OCI-LY7 (cell line): ENCODE measurements at regions of chr3 and their contacts with region 1.

Region 1: DNA sequence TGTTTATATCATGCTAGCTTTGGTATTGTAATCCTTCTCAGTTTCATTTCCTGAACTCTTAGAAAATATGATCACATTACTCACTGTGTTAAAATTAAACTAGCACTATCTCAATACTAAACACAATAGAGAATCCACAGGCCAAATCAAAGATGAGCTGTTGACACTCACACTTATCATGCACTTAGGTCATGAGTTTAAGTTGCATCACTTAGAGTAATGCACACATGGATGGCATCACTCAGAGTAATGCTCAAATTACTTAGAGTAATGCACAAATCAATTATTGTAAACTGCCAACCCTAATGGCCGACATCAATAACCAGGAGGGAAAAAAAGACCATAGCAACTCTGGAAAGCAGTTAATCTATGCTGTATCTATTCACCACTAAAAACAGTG is 40.0 kb upstream of the MCF2L2 start:
- DNase-seq: no peak
- H3K4me3 ChIP-seq: no peak overlapping the region
- H3K27ac ChIP-seq: no peak overlapping the region
- H3K4me1 ChIP-seq: peaks cover 28% of the 10 kb centered on the region
- CTCF ChIP-seq: no peak

Region 2: DNA sequence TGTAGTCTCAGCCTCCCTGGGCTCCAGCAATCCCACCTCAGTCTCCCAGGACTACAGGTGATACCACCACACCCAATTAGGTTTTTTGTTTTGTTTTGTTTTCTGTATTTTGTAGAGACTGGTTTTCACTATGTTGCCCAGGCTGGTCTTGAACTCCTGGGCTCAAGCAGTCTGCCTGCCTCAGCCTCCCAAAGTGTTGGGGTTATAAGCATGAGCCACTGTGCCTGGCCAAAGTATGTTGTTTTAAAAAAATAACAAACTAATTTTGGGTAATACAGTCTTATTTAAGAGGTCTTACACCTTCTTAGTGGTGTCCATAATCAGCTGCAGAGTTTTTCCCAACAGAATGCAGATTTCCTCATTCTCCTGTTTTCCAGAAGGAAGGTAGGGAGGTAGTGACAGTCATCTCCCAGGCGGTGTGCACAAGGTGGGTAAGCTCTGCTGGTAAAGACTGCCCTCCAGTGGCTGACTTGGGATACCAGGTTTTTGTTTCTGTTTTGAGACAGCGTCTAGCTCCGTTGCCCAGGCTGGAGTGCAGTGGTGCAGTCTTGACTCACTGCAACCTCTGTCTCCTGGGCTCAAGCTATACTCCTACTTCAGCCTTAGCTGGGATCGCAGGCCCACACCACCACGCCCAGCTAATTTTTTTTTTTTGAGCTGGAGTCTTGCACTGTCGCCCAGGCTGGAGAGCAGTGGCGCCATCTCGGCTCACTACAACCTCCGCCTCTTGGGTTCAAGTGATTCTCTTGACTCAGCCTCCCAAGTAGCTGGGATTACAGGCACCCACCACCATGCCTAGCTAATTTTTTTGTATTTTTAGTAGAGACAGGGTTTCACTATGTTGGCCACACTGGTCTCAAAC is 298.6 kb after region 1 on chr3:
- CTCF ChIA-PET with region 1: interaction called, 5 read pairs
- POLR2A ChIA-PET with region 1: interaction called, 5 read pairs
- intact Hi-C with region 1: loop called (anchors 1 kb)
- DNase-seq: peak; percentile 82
- H3K4me3 ChIP-seq: no peak overlapping the region
- H3K27ac ChIP-seq: peak overlapping the region; percentile 44
- H3K4me1 ChIP-seq: peaks cover 27% of the 10 kb centered on the region
- CTCF ChIP-seq: peak; percentile 91

Region 3: GRCh38 chr3:183815563-183815940 is 347.1 kb after region 1 on chr3:
- CTCF ChIA-PET with region 1: no interaction called
- POLR2A ChIA-PET with region 1: interaction called, 3 read pairs
- intact Hi-C with region 1: loop called (anchors 5 kb)
- DNase-seq: peak; percentile 64
- H3K4me3 ChIP-seq: peak overlapping the region; percentile 33
- H3K27ac ChIP-seq: peak overlapping the region; percentile 71
- H3K4me1 ChIP-seq: peaks cover 24% of the 10 kb centered on the region
- CTCF ChIP-seq: no peak

Region 4: GRCh38 chr3:183884427-183885296 is 416.2 kb after region 1 on chr3 and contains the start of gene PARL:
- CTCF ChIA-PET with region 1: interaction called, 4 read pairs
- POLR2A ChIA-PET with region 1: interaction called, 3 read pairs
- intact Hi-C with region 1: loop called (anchors 1 kb)
- DNase-seq: peak; percentile 95
- H3K4me3 ChIP-seq: peak within 1 kb of the TSS; percentile 76
- H3K27ac ChIP-seq: peak within 1 kb of the TSS; percentile 47
- H3K4me1 ChIP-seq: peaks cover 19% of the 10 kb centered on the region
- CTCF ChIP-seq: peak; percentile 86
- total RNA-seq, gene PARL: 43.5 and 46.1 TPM in 2 replicates

Region 5: GRCh38 chr3:184513276-184514170 is 1045.1 kb after region 1 on chr3:
- CTCF ChIA-PET with region 1: no interaction called
- POLR2A ChIA-PET with region 1: no interaction called
- intact Hi-C with region 1: no loop called
- DNase-seq: peak; percentile 65
- H3K4me3 ChIP-seq: no peak overlapping the region
- H3K27ac ChIP-seq: no peak overlapping the region
- H3K4me1 ChIP-seq: no peaks in the 10 kb centered on the region
- CTCF ChIP-seq: peak; percentile 75